ENCODE measurements at regions of chr6 and their contacts with region 1.

Region 1: GRCh38 chr6:117615894-117616390 is 13.6 kb upstream of the GOPC start:
- DNase-seq: no peak
- ATAC-seq: no peak
- H3K4me3 ChIP-seq: no peak overlapping the region
- H3K4me3 Mint-ChIP-seq: no peak overlapping the region
- H3K27ac ChIP-seq: peak overlapping the region in 1 of 2 experiments; percentile 87
- H3K27ac Mint-ChIP-seq: no peak overlapping the region
- H3K4me1 ChIP-seq: peaks cover 16% of the 10 kb centered on the region
- H3K4me1 Mint-ChIP-seq: peaks cover 20% of the 10 kb centered on the region
- H3K27me3 ChIP-seq: no peaks in the 10 kb centered on the region
- H3K27me3 Mint-ChIP-seq: peaks cover 4% of the 10 kb centered on the region
- CTCF ChIP-seq: no peak

Region 2: DNA sequence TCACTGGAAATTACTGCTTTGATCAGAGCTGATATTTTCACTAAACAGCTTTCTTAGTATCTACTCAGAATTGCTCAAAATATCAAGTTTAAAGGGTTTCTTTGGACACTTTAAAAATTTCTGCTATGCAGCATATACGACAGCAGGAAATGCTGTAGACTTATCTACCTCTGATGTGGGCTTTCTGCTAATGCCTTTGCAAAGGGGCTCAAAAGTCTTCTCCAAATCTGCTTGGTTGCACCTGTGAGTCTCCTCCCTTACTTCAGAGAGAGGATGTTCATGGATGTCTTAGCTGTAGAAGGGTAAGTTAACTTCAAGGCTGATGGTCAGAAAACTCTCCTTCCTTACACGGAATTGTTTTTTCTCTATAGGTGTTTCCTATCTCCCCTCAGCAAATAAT is 39.4 kb after region 1 on chr6:
- CTCF ChIA-PET with region 1: no interaction called
- POLR2A ChIA-PET with region 1: no interaction called
- intact Hi-C with region 1: loop called in 1 of 2 experiments (anchors 1 kb)
- DNase-seq: peak in 1 of 9 experiments; percentile 36
- ATAC-seq: peak; percentile 65
- H3K4me3 ChIP-seq: no peak overlapping the region
- H3K4me3 Mint-ChIP-seq: no peak overlapping the region
- H3K27ac ChIP-seq: no peak overlapping the region
- H3K27ac Mint-ChIP-seq: peak overlapping the region; percentile 12
- H3K4me1 ChIP-seq: peaks cover 9% of the 10 kb centered on the region
- H3K4me1 Mint-ChIP-seq: peaks cover 16% of the 10 kb centered on the region
- H3K27me3 ChIP-seq: no peaks in the 10 kb centered on the region
- H3K27me3 Mint-ChIP-seq: no peaks in the 10 kb centered on the region
- CTCF ChIP-seq: no peak

Measured in CD8-positive, alpha-beta T cell (primary cell).